ENCODE measurements at regions of chr3 and their contacts with region 1.

Region 1: DNA sequence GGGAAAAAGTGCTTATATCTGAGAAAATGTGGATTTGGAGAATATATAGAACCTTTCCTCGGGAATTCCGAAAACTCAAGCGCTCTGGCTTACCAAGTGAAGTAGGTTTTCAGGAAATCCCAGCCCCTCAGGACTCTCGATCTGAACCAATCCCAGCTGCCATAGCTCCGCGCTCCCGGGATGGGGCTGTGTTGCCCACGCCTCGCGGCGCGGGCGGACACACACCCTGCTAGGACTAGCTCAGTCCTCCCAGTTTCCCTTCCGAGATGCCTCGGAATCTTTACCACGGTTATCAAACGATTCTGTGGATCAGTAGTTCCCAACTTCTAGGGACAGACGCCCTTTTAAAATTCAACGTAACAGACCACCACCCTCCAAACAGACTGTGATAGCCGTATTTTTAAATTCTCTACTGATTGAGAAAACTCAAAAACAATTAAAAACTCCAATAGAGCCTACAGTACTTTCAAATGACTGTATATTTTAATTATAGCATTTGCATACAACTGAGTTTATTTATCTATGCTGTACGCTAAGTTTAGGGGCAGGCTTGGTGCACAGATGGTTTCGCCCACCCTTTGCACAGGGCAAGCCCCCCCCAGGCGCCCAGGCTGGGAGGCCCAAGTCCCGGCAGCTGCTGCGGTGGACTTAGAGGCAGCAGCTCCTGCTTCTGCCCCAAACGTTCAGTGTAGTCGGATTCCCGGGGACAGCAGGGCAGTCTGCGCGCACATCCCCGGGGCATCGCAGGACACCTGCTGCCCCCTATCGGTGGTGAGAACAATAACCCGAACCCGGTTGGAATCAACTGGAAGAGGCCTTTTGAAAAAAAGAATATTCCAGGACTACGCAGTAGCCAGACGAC is 52.3 kb downstream of the CCDC54 start:
- DNase-seq: peak; percentile 62
- ATAC-seq: peak; percentile 58
- H3K4me3 Mint-ChIP-seq: peak overlapping the region; percentile 78
- H3K27ac Mint-ChIP-seq: no peak overlapping the region
- H3K4me1 Mint-ChIP-seq: peaks cover 21% of the 10 kb centered on the region
- H3K27me3 Mint-ChIP-seq: peaks cover 38% of the 10 kb centered on the region

Region 2: DNA sequence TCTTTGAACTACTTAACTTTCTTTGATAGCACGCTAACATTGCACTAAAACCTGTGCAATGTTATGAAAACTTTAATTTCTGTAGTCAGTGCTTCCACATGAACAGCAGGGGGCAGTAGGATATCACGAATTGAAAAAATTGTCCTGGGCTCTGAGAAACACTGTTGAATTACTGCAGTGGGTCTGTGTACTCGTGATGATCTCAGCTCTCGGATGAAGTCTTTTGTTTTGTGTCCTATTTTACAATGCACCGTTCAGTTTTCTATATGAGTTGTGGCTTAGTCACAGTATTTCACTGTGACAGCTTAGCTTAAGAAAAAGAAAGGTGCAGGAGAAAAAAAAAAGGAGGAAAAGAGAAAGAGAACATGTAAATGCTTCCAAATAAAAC is 193.6 kb before region 1 on chr3:
- CTCF ChIA-PET with region 1: interaction called, 30 read pairs
- POLR2A ChIA-PET with region 1: no interaction called
- DNase-seq: peak; percentile 70
- ATAC-seq: peak; percentile 51
- H3K4me3 Mint-ChIP-seq: peak overlapping the region; percentile 65
- H3K27ac Mint-ChIP-seq: no peak overlapping the region
- H3K4me1 Mint-ChIP-seq: peaks cover 18% of the 10 kb centered on the region
- H3K27me3 Mint-ChIP-seq: peaks cover 7% of the 10 kb centered on the region

Region 3: GRCh38 chr3:107409365-107409764 is 20.2 kb before region 1 on chr3:
- CTCF ChIA-PET with region 1: interaction called, 12 read pairs
- POLR2A ChIA-PET with region 1: no interaction called
- DNase-seq: no peak
- ATAC-seq: no peak
- H3K4me3 Mint-ChIP-seq: no peak overlapping the region
- H3K27ac Mint-ChIP-seq: no peak overlapping the region
- H3K4me1 Mint-ChIP-seq: peaks cover 5% of the 10 kb centered on the region
- H3K27me3 Mint-ChIP-seq: no peaks in the 10 kb centered on the region

Region 4: GRCh38 chr3:107414325-107414964 is 15.1 kb before region 1 on chr3:
- CTCF ChIA-PET with region 1: interaction called, 38 read pairs
- POLR2A ChIA-PET with region 1: no interaction called
- DNase-seq: no peak
- ATAC-seq: peak; percentile 86
- H3K4me3 Mint-ChIP-seq: no peak overlapping the region
- H3K27ac Mint-ChIP-seq: peak overlapping the region; percentile 68
- H3K4me1 Mint-ChIP-seq: peaks cover 12% of the 10 kb centered on the region
- H3K27me3 Mint-ChIP-seq: peaks cover 2% of the 10 kb centered on the region

Measured in activated CD8-positive, alpha-beta T cell treated with anti-CD3 and anti-CD28 coated beads, Interleukin-2, amount 10 ng/mL, durations not matched to agents 7 days and 5 days (primary cell).